Natural killer cell (primary cell): ENCODE measurements at regions of chr3 and their contacts with region 1.

Region 1: GRCh38 chr3:161274719-161275298 is 53.7 kb downstream of the NMD3 start:
- DNase-seq: peak in 1 of 2 donors; percentile 69
- ATAC-seq: peak; percentile 43 to 59 (median 46)
- H3K4me3 ChIP-seq: no peak overlapping the region
- H3K4me3 Mint-ChIP-seq: no peak overlapping the region
- H3K27ac ChIP-seq: no peak overlapping the region
- H3K27ac Mint-ChIP-seq: no peak overlapping the region
- H3K4me1 ChIP-seq: peaks cover 7% of the 10 kb centered on the region
- H3K4me1 Mint-ChIP-seq: no peaks in the 10 kb centered on the region
- H3K27me3 ChIP-seq: no peaks in the 10 kb centered on the region
- H3K27me3 Mint-ChIP-seq: peaks cover 0 to 3% of the 10 kb centered on the region in 2 donors
- CTCF ChIP-seq: peak; percentile 57

Region 2: GRCh38 chr3:160686955-160687535 is 587.8 kb before region 1 on chr3:
- intact Hi-C with region 1: loop called (anchors 5 kb)
- DNase-seq: peak in 1 of 2 donors; percentile 40
- ATAC-seq: no peak
- H3K4me3 ChIP-seq: no peak overlapping the region
- H3K4me3 Mint-ChIP-seq: no peak overlapping the region
- H3K27ac ChIP-seq: no peak overlapping the region
- H3K27ac Mint-ChIP-seq: no peak overlapping the region
- H3K4me1 ChIP-seq: no peaks in the 10 kb centered on the region
- H3K4me1 Mint-ChIP-seq: no peaks in the 10 kb centered on the region
- H3K27me3 ChIP-seq: no peaks in the 10 kb centered on the region
- H3K27me3 Mint-ChIP-seq: peaks cover 0 to 2% of the 10 kb centered on the region in 2 donors
- CTCF ChIP-seq: peak; percentile 34

Region 3: DNA sequence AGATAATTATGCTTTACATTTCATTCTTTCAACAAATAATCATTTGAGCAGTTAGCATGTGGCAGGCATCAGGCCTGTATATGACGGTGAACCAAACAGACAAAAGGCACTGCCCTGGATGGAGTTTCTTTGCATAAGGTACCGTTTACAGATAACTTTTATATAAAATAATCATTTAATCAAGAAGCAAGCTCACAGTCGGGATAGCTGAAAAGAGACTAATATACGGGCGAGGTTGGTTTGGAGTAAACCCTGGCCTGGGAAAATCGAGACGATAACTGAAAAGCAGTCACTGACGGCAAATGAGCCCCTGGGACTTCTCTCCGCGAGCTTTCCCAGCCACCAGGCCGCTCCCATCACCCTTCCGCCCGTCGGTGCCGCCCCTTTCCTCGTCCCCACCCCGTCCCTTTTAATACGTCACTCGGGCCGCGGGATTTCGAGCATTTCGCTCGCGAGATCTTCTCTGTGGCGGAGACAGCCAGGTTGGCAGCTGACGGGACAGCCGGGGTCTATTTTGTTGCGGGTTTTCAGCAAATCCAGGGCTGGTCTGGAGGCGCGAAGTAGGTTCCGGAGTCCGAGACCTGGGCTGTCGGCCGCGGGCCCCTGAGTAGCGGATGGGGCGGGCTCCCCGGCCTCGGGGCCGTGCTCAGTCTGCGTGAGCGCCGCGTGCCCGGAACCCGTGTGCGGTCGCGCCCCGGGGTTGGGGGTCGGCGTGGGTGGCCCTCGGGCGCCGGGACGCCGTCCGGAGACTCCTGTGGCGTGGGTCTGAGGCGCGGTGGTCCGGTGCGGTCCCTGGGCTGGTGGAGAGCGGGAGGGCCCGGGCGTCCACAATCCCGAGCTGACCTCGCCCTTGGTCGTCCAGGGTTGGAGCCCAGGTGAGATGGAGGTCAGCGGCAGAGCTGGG is 53.7 kb before region 1 on chr3 and contains the start of gene NMD3:
- intact Hi-C with region 1: no loop called
- DNase-seq: peak; percentile 89 to 95
- ATAC-seq: peak; percentile 96 to 97 (median 96)
- H3K4me3 ChIP-seq: peak within 1 kb of the TSS; percentile 89
- H3K4me3 Mint-ChIP-seq: peak within 1 kb of the TSS; percentile 94
- H3K27ac ChIP-seq: peak within 1 kb of the TSS; percentile 77
- H3K27ac Mint-ChIP-seq: peak within 1 kb of the TSS; percentile 88 to 94
- H3K4me1 ChIP-seq: peaks cover 13% of the 10 kb centered on the region
- H3K4me1 Mint-ChIP-seq: peaks cover 32 to 38% of the 10 kb centered on the region in 2 donors
- H3K27me3 ChIP-seq: no peaks in the 10 kb centered on the region
- H3K27me3 Mint-ChIP-seq: peaks cover 9 to 15% of the 10 kb centered on the region in 2 donors
- CTCF ChIP-seq: no peak
- total RNA-seq, gene NMD3: 40.7 to 51.1 (median 43.6) TPM

Region 4: DNA sequence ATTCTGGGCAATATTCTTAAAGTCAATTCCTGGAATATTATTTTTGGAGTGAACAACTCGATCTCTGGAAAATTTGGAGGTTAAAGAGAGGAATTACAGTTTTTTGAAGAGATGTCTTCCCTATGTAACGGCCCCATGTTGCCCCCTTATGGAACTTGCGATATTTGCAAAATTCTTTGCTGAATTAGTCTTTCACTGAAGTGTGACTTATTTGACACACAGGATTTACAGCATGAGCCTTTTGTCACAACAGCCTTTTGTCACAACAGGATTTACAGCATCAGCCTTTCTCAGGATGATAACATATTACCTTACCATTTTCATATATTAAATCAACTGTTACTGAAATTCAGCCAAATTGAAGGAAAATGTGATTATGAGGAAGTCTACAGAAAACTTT is 134.3 kb after region 1 on chr3:
- intact Hi-C with region 1: loop called (anchors 1 kb)
- DNase-seq: peak in 1 of 2 donors; percentile 70
- ATAC-seq: peak in 2 of 3 donors; percentile 61 to 65
- H3K4me3 ChIP-seq: no peak overlapping the region
- H3K4me3 Mint-ChIP-seq: no peak overlapping the region
- H3K27ac ChIP-seq: no peak overlapping the region
- H3K27ac Mint-ChIP-seq: no peak overlapping the region
- H3K4me1 ChIP-seq: peaks cover 17% of the 10 kb centered on the region
- H3K4me1 Mint-ChIP-seq: peaks cover 16 to 18% of the 10 kb centered on the region in 2 donors
- H3K27me3 ChIP-seq: no peaks in the 10 kb centered on the region
- H3K27me3 Mint-ChIP-seq: peaks cover 23 to 54% of the 10 kb centered on the region in 2 donors
- CTCF ChIP-seq: peak; percentile 60